Dorsolateral prefrontal cortex (tissue), 120 donors: ENCODE measurements at regions of chr10 and their contacts with region 1.

Region 1: DNA sequence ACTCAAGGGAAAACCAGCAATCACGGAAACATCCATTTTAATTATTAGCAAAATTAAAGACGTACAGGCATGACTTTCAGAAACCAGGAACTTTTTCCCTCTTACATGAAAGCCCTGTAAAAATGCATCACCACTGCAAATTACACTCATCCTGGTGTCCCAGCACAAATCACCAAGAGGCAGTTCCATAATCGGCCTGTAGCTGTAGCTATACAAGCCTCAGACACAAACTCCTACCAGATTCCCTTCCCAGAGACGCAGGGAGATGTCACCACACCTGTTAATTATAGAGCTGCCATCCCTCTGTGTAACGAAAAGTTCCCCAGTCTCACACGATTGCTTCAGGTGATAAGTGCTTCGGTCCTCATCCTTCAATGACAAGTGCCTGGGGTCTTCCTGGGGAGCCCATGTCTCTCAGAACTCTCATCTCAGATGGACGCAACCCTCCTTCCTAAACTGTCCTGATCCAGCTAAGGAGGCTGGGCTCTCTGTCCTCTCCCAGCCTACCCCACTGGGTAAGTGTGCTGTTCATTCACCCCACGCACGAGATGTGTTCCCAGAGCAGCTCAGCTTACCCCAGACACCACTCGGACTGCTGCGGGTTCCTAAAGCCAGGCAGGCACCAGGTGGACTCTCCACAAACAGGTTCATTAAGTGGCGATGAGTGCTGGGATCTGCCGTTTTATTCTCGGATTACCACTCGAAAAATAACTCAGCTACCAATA is 5.9 kb downstream of the FGFR2 start:
- DNase-seq: peak in 1 of 10 donors; percentile 25
- H3K4me3 ChIP-seq: peak overlapping the region in 50 of 59 donors; percentile 2 to 88 (median 75)
- H3K27ac ChIP-seq: peak overlapping the region in 57 of 59 donors; percentile 27 to 99 (median 96)
- H3K27me3 ChIP-seq: peaks cover 0 to 21% (median 1%) of the 10 kb centered on the region in 45 donors
- CTCF ChIP-seq: peak in 31 of 56 donors; percentile 7 to 52 (median 26)

Region 2: DNA sequence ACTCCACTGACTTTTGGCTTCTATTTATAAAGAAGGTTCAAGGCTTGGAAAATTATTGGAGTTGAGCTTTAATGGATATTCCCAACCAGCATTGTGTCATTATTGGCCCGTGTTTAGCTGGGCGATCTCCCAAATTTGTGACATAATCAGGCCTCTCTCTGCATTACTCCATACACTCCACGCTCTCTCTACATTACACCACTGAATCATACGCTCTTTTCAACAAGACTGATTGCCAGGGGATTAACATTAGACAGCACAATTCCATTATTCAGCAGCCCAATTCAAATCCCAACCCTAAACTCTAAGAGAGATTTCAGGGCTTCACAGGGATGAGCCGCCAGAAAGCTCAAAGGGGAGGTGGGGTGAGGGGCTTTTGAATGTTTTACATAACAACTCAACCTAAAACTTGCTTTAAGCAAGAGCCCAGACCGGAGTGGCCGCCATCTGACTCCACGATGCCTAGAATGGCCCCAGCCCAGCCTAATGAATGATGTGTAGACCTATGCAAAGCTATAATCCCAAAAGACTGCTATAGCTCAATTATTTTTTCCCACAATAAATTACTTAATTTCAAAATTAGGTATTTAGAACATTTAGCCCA is 55.9 kb before region 1 on chr10:
- intact Hi-C with region 1: loop called (anchors 2 to 5 kb)
- DNase-seq: peak in 5 of 10 donors; percentile 58 to 86 (median 61)
- H3K4me3 ChIP-seq: peak overlapping the region in 1 of 59 donors; percentile 10
- H3K27ac ChIP-seq: peak overlapping the region; percentile 65 to 100 (median 96)
- H3K27me3 ChIP-seq: no peaks in the 10 kb centered on the region
- CTCF ChIP-seq: peak in 4 of 56 donors; percentile 9 to 23 (median 12)